Mammary epithelial cell (primary cell): ENCODE measurements at regions of chr10 and their contacts with region 1.

Region 1: DNA sequence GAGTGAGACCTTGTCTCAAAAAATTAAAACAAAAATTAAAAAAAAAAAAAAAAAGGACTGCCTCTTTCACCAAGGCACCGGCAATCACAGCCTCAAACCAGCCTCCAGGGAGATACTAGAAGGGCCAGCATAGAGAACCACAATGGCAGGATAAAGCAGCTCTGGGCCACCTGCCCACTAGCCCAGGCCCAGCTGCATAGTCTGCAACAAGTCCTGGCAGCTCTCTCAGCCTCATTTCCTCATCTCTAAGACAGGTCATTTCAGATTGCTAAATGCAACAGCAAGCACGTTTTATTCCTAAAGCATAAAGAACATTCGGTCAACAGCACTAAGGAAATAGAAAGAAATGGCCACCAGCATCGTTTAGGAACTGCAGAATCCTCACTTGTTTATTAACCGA is 28.8 kb downstream of the XPNPEP1 start:
- DNase-seq: peak; percentile 89
- H3K4me3 ChIP-seq: no peak overlapping the region
- H3K27ac ChIP-seq: peak overlapping the region; percentile 29
- H3K4me1 ChIP-seq: peaks cover 69% of the 10 kb centered on the region
- H3K27me3 ChIP-seq: no peaks in the 10 kb centered on the region
- CTCF ChIP-seq: no peak

Region 2: DNA sequence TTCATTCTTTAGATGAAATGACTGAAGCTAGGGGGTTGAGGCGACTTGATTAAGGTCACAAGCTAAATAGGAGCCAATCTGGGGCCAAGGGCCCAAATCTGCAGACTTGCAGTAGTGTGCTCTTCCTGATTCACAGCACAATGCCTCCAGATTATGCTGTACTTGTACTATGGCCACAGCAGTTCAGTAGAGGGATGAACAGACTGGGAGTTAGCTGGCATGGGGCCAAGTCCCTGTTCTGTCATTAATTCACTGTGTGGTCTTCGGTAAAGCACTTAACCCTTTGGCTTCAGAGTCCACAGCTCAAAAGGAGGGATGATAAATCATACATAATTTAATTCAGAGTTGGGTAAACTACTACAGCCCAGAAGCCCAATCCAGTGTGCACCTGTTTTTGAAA is 168.0 kb before region 1 on chr10:
- CTCF ChIA-PET with region 1: no interaction called
- dilution Hi-C with region 1: no loop called
- in situ Hi-C with region 1: no loop called
- intact Hi-C with region 1: no loop called
- DNase-seq: no peak
- H3K4me3 ChIP-seq: no peak overlapping the region
- H3K27ac ChIP-seq: no peak overlapping the region
- H3K4me1 ChIP-seq: no peaks in the 10 kb centered on the region
- H3K27me3 ChIP-seq: no peaks in the 10 kb centered on the region
- CTCF ChIP-seq: no peak

Region 3: GRCh38 chr10:109934958-109935706 is 40.6 kb after region 1 on chr10:
- CTCF ChIA-PET with region 1: no interaction called
- dilution Hi-C with region 1: loop called (anchors 5 kb)
- in situ Hi-C with region 1: no loop called
- intact Hi-C with region 1: no loop called
- DNase-seq: peak; percentile 56
- H3K4me3 ChIP-seq: no peak overlapping the region
- H3K27ac ChIP-seq: no peak overlapping the region
- H3K4me1 ChIP-seq: peaks cover 11% of the 10 kb centered on the region
- H3K27me3 ChIP-seq: no peaks in the 10 kb centered on the region
- CTCF ChIP-seq: no peak

Region 4: DNA sequence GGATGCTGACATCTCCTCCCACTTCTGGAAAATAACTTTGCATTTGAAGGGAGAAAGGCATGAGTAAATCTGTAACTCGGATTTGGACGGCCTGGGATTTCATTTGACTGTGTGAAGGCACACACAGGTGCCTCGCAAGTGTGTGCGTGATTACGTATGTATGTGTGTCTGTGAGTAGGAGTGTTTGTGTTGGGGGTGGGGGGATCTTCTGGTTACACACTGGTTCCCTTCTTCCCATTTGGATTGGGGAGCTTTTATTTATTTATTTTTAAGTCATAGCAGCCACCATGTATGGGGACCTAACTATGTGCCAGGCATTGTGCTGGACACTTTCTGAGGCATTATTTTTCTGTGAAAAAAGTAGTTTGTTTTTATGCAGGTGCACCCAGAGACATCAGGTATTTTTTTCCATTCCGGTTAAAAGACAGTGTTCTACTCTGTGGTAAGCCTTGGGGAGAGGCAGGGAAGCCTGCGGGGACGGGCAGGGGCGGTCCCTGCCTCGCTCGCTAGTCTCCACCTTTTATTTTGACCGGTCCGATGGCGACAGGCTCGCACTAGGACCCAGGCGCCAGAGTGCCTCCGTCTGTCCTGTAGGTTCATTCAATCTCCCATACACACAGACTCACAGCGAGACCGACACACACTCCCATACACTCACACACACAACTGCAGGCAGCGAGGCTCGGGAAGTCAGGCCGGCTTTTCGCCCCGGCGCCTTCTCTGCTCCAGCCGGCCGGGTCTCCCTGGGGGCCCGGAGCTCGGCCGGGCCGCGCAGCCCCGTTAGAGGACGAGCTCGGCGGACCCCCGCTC is 312.7 kb after region 1 on chr10 and contains the start of gene MXI1:
- CTCF ChIA-PET with region 1: no interaction called
- dilution Hi-C with region 1: no loop called
- in situ Hi-C with region 1: no loop called
- intact Hi-C with region 1: no loop called
- DNase-seq: peak; percentile 83
- H3K4me3 ChIP-seq: peak within 1 kb of the TSS; percentile 75 to 82 (median 80)
- H3K27ac ChIP-seq: peak within 1 kb of the TSS; percentile 33
- H3K4me1 ChIP-seq: peaks cover 10% of the 10 kb centered on the region
- H3K27me3 ChIP-seq: no peaks in the 10 kb centered on the region
- CTCF ChIP-seq: no peak
- total RNA-seq, gene MXI1: 17.0 to 19.3 TPM